A673 (cell line): ENCODE measurements at regions of chr15 and their contacts with region 1.

Region 1: GRCh38 chr15:34587717-34588674 is 4.5 kb upstream of the GOLGA8B start:
- DNase-seq: peak; percentile 76
- H3K4me3 ChIP-seq: peak overlapping the region; percentile 1
- H3K27ac ChIP-seq: no peak overlapping the region
- H3K4me1 ChIP-seq: peaks cover 5% of the 10 kb centered on the region
- H3K27me3 ChIP-seq: no peaks in the 10 kb centered on the region
- CTCF ChIP-seq: peak; percentile 83

Region 2: GRCh38 chr15:34514251-34514670 is 73.7 kb before region 1 on chr15:
- CTCF ChIA-PET with region 1: no interaction called
- POLR2A ChIA-PET with region 1: no interaction called
- intact Hi-C with region 1: loop called (anchors 2 kb)
- DNase-seq: peak; percentile 30
- H3K4me3 ChIP-seq: peak overlapping the region; percentile 58
- H3K27ac ChIP-seq: no peak overlapping the region
- H3K4me1 ChIP-seq: peaks cover 4% of the 10 kb centered on the region
- H3K27me3 ChIP-seq: peaks cover 57% of the 10 kb centered on the region
- CTCF ChIP-seq: no peak

Region 3: DNA sequence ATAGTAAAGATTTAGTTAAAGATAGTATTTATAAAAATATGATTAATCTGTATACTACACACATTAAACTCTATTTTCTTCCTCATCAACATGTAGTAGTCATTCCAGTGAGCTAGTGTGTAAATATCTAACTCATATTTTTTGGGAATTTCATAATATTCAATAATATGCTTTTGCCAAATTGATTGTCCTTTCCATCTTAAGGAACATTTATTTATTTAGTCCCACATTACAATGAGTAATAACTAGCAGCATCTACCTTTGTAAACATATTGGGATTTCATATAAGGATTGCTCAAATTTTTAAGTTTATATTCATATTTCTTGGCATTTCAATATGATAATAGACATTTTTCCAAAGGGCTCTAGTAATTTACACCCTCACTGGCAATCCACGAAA is 49.3 kb after region 1 on chr15:
- CTCF ChIA-PET with region 1: no interaction called
- POLR2A ChIA-PET with region 1: no interaction called
- intact Hi-C with region 1: no loop called
- DNase-seq: no peak
- H3K4me3 ChIP-seq: no peak overlapping the region
- H3K27ac ChIP-seq: no peak overlapping the region
- H3K4me1 ChIP-seq: no peaks in the 10 kb centered on the region
- H3K27me3 ChIP-seq: no peaks in the 10 kb centered on the region
- CTCF ChIP-seq: no peak

Region 4: DNA sequence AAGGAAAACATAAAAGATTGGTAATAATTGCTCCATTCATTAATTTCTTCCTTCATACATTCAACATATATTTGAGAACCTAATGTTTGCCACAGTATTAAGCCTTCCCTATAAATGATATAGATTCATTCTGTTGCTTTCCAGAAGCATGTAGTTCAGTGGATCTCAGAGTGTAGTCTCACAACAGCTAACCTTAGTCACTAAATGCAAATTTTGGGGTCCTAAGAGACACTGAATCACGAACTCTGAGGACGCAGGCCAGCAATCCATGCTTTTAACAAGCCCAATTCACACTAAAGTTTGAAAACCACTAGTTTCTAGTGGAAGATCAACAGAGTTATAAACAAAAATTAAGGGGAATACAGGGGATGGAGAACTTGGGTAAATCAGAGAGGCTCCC is 388.7 kb after region 1 on chr15:
- CTCF ChIA-PET with region 1: no interaction called
- POLR2A ChIA-PET with region 1: no interaction called
- intact Hi-C with region 1: no loop called
- DNase-seq: no peak
- H3K4me3 ChIP-seq: no peak overlapping the region
- H3K27ac ChIP-seq: no peak overlapping the region
- H3K4me1 ChIP-seq: no peaks in the 10 kb centered on the region
- H3K27me3 ChIP-seq: no peaks in the 10 kb centered on the region
- CTCF ChIP-seq: no peak